GM12878 (cell line): ENCODE measurements at regions of chr6 and their contacts with region 1.

Region 1: DNA sequence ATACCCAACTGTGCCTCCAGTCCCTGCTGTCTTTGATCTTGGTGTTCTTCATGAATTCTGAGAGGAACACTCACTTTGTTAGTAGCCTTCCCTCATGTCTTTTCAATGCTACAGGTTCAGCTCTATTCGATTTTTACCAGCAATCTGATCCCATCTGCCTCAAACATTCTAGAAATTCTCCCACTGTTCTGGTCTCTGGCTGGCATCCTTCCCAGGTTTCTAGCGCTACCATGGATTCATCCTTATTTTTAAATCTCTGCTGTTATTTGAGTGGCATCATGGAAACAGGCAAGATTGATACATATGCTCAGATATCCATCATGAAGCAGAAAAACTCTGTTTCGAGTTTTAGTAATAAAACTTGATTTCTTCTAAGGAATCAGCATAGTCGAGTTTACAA is 94.8 kb downstream of the GRM1 start:
- DNase-seq: no peak
- ATAC-seq: no peak
- H3K4me3 ChIP-seq: no peak overlapping the region
- H3K27ac ChIP-seq: no peak overlapping the region
- H3K4me1 ChIP-seq: no peaks in the 10 kb centered on the region
- H3K27me3 ChIP-seq: no peaks in the 10 kb centered on the region
- CTCF ChIP-seq: no peak
- EP300 ChIP-seq: no peak
- POLR2A ChIP-seq: no peak
- RAD21 ChIP-seq: no peak

Region 2: DNA sequence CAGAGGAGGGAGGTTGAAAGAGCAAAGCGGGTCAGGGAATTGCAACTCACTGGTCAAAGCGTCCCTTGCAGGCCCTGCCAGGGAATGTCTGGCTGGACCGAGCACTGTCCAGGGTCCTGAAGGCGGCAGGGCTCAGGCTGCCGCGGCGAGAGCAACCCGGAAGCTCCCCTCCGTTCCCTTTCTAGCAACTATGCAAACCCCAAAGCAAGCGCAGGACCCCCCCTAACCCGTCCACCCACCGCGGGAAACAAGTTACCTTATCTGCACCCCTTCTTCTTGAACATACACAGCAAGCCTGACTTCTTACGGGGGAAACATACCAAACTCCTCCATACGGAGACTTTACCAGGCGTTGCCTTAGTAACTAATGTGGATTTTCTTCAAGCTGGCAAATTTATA is 95.3 kb before region 1 on chr6:
- CTCF ChIA-PET with region 1: no interaction called
- POLR2A ChIA-PET with region 1: no interaction called
- RAD21 ChIA-PET with region 1: no interaction called
- SMC1A ChIA-PET with region 1: no interaction called
- in situ Hi-C with region 1: no loop called
- intact Hi-C with region 1: no loop called
- DNase-seq: no peak
- ATAC-seq: peak; percentile 81
- H3K4me3 ChIP-seq: no peak overlapping the region
- H3K27ac ChIP-seq: no peak overlapping the region
- H3K4me1 ChIP-seq: no peaks in the 10 kb centered on the region
- H3K27me3 ChIP-seq: peaks cover 0 to 4% of the 10 kb centered on the region in 2 experiments; a peak in 3 of 4 replicates
- CTCF ChIP-seq: no peak
- EP300 ChIP-seq: no peak
- POLR2A ChIP-seq: no peak
- RAD21 ChIP-seq: no peak

Region 3: GRCh38 chr6:146578054-146578453 is 454.4 kb after region 1 on chr6:
- CTCF ChIA-PET with region 1: no interaction called
- POLR2A ChIA-PET with region 1: no interaction called
- RAD21 ChIA-PET with region 1: no interaction called
- SMC1A ChIA-PET with region 1: no interaction called
- in situ Hi-C with region 1: no loop called
- intact Hi-C with region 1: loop called (anchors 10 kb)
- DNase-seq: no peak
- ATAC-seq: no peak
- H3K4me3 ChIP-seq: no peak overlapping the region
- H3K27ac ChIP-seq: no peak overlapping the region
- H3K4me1 ChIP-seq: no peaks in the 10 kb centered on the region
- H3K27me3 ChIP-seq: no peaks in the 10 kb centered on the region
- CTCF ChIP-seq: no peak
- EP300 ChIP-seq: no peak
- POLR2A ChIP-seq: no peak
- RAD21 ChIP-seq: no peak

Region 4: DNA sequence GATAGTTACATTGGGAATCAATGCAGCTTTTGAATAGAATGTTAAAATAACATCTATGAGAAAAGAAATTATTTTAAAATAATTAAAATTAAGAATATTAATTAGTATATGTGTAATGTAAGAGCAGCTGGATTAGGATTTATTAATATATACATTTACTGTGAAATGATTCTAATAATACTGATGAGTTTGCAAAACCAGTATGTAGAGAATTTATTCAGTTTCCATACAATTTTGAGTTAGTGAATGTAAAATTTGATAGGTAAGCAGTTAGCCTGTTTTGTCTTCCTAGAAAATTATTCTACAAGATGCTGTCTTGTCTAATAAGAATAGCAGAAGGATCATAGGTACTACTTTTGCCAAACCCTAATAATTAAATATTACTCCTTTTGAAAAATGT is 1151.2 kb after region 1 on chr6:
- CTCF ChIA-PET with region 1: no interaction called
- POLR2A ChIA-PET with region 1: interaction called, 11 read pairs
- RAD21 ChIA-PET with region 1: no interaction called
- SMC1A ChIA-PET with region 1: no interaction called
- in situ Hi-C with region 1: no loop called
- intact Hi-C with region 1: no loop called
- DNase-seq: no peak
- ATAC-seq: no peak
- H3K4me3 ChIP-seq: no peak overlapping the region
- H3K27ac ChIP-seq: no peak overlapping the region
- H3K4me1 ChIP-seq: no peaks in the 10 kb centered on the region
- H3K27me3 ChIP-seq: no peaks in the 10 kb centered on the region
- CTCF ChIP-seq: no peak
- EP300 ChIP-seq: no peak
- POLR2A ChIP-seq: no peak
- RAD21 ChIP-seq: no peak